ENCODE measurements at regions of chr17 and their contacts with region 1.

Region 1: GRCh38 chr17:70239391-70239826 is 70.1 kb downstream of the KCNJ2 start:
- DNase-seq: peak; percentile 72
- H3K4me3 ChIP-seq: no peak overlapping the region
- H3K4me3 Mint-ChIP-seq: no peak overlapping the region
- H3K27ac Mint-ChIP-seq: no peak overlapping the region
- H3K4me1 ChIP-seq: peaks cover 23% of the 10 kb centered on the region
- H3K4me1 Mint-ChIP-seq: peaks cover 22% of the 10 kb centered on the region
- H3K27me3 ChIP-seq: no peaks in the 10 kb centered on the region
- H3K27me3 Mint-ChIP-seq: no peaks in the 10 kb centered on the region
- CTCF ChIP-seq: no peak

Region 2: GRCh38 chr17:70295731-70296130 is 56.3 kb after region 1 on chr17:
- CTCF ChIA-PET with region 1: no interaction called
- POLR2A ChIA-PET with region 1: no interaction called
- intact Hi-C with region 1: loop called (anchors 5 kb)
- DNase-seq: no peak
- H3K4me3 ChIP-seq: no peak overlapping the region
- H3K4me3 Mint-ChIP-seq: no peak overlapping the region
- H3K27ac Mint-ChIP-seq: no peak overlapping the region
- H3K4me1 ChIP-seq: no peaks in the 10 kb centered on the region
- H3K4me1 Mint-ChIP-seq: no peaks in the 10 kb centered on the region
- H3K27me3 ChIP-seq: no peaks in the 10 kb centered on the region
- H3K27me3 Mint-ChIP-seq: peaks cover 3% of the 10 kb centered on the region
- CTCF ChIP-seq: no peak

Region 3: DNA sequence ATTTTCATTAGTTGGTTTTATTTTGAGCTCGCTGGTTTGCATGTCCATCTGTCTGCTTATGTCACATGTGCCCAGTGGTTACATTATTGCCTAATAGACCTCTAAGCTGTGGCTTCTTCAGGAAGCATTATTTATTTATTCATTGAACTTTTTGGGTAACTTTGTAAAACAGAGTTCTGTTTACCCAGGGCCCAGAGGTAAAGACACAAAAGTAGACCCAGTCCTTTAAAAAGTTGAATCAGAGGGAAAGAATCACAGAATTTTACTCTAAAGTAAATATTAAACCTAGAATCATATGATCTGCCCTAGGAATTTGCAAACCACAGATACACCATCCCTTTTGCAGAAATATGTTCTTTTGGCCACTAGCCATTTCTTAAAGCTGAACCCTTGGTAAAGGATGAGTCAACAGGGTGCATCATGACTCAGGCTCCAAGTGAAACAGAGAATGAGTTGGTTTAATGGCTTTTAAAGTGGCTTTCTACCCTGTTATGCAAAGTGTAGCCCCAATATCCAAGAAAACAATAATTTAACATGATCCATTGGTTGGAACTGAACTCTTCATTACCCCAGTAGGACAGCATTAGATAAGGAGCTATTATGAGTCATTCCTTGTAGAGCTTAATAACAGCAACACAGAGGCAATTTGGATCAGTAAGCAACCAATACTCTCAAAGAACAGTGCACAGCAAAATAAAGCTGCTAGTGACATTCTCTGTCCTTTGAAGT is 166.2 kb after region 1 on chr17:
- CTCF ChIA-PET with region 1: no interaction called
- POLR2A ChIA-PET with region 1: no interaction called
- intact Hi-C with region 1: loop called (anchors 1 kb)
- DNase-seq: no peak
- H3K4me3 ChIP-seq: no peak overlapping the region
- H3K4me3 Mint-ChIP-seq: no peak overlapping the region
- H3K27ac Mint-ChIP-seq: no peak overlapping the region
- H3K4me1 ChIP-seq: peaks cover 13% of the 10 kb centered on the region
- H3K4me1 Mint-ChIP-seq: peaks cover 5% of the 10 kb centered on the region
- H3K27me3 ChIP-seq: no peaks in the 10 kb centered on the region
- H3K27me3 Mint-ChIP-seq: no peaks in the 10 kb centered on the region
- CTCF ChIP-seq: no peak

Region 4: GRCh38 chr17:70521821-70522256 is 282.4 kb after region 1 on chr17:
- CTCF ChIA-PET with region 1: no interaction called
- POLR2A ChIA-PET with region 1: no interaction called
- intact Hi-C with region 1: loop called (anchors 2 kb)
- DNase-seq: no peak
- H3K4me3 ChIP-seq: no peak overlapping the region
- H3K4me3 Mint-ChIP-seq: no peak overlapping the region
- H3K27ac Mint-ChIP-seq: no peak overlapping the region
- H3K4me1 ChIP-seq: peaks cover 17% of the 10 kb centered on the region
- H3K4me1 Mint-ChIP-seq: peaks cover 20% of the 10 kb centered on the region
- H3K27me3 ChIP-seq: no peaks in the 10 kb centered on the region
- H3K27me3 Mint-ChIP-seq: no peaks in the 10 kb centered on the region
- CTCF ChIP-seq: no peak

Region 5: DNA sequence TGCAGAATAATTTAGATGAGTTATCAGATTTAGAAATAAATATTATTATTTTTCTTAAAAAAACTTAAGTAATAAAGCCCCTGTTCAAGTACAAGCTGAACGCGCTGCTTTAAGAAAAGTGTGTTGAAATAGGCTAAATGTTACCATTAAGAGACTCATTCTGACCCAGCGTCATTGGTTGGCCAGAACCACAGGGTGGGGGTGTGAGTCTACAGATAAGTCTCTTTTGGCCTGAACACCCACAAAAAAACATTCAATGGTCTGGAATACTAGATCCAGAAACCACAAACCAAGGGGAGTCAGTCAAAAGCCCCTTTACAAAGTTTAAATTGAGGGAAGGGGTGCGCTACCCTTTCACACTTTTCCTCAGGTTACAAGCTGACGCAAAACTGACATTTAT is 706.0 kb after region 1 on chr17:
- CTCF ChIA-PET with region 1: no interaction called
- POLR2A ChIA-PET with region 1: no interaction called
- intact Hi-C with region 1: no loop called
- DNase-seq: no peak
- H3K4me3 ChIP-seq: no peak overlapping the region
- H3K4me3 Mint-ChIP-seq: no peak overlapping the region
- H3K27ac Mint-ChIP-seq: no peak overlapping the region
- H3K4me1 ChIP-seq: no peaks in the 10 kb centered on the region
- H3K4me1 Mint-ChIP-seq: no peaks in the 10 kb centered on the region
- H3K27me3 ChIP-seq: no peaks in the 10 kb centered on the region
- H3K27me3 Mint-ChIP-seq: no peaks in the 10 kb centered on the region
- CTCF ChIP-seq: no peak